PC-9 (cell line): ENCODE measurements at regions of chr3 and their contacts with region 1.

Region 1: GRCh38 chr3:178676942-178677790 is 140.9 kb downstream of the KCNMB2 start:
- DNase-seq: no peak
- H3K4me3 ChIP-seq: no peak overlapping the region
- H3K27ac ChIP-seq: no peak overlapping the region
- H3K4me1 ChIP-seq: no peaks in the 10 kb centered on the region
- H3K27me3 ChIP-seq: no peaks in the 10 kb centered on the region
- CTCF ChIP-seq: no peak

Region 2: GRCh38 chr3:178618197-178618596 is 59.0 kb before region 1 on chr3:
- CTCF ChIA-PET with region 1: no interaction called
- POLR2A ChIA-PET with region 1: no interaction called
- intact Hi-C with region 1: no loop called
- DNase-seq: no peak
- H3K4me3 ChIP-seq: no peak overlapping the region
- H3K27ac ChIP-seq: no peak overlapping the region
- H3K4me1 ChIP-seq: no peaks in the 10 kb centered on the region
- H3K27me3 ChIP-seq: no peaks in the 10 kb centered on the region
- CTCF ChIP-seq: no peak

Region 3: GRCh38 chr3:178703268-178703975 is 26.3 kb after region 1 on chr3:
- CTCF ChIA-PET with region 1: no interaction called
- POLR2A ChIA-PET with region 1: interaction called, 17 read pairs
- intact Hi-C with region 1: no loop called
- DNase-seq: peak in 1 of 2 experiments; percentile 64
- H3K4me3 ChIP-seq: no peak overlapping the region
- H3K27ac ChIP-seq: no peak overlapping the region
- H3K4me1 ChIP-seq: peaks cover 13% of the 10 kb centered on the region; the same call in 1 of the 2 replicates
- H3K27me3 ChIP-seq: no peaks in the 10 kb centered on the region
- CTCF ChIP-seq: no peak